ENCODE measurements at regions of chr10 and their contacts with region 1.

Region 1: GRCh38 chr10:86349474-86349873 is 17.1 kb downstream of the GRID1 start:
- DNase-seq: no peak
- H3K4me3 ChIP-seq: no peak overlapping the region
- H3K27ac ChIP-seq: no peak overlapping the region
- H3K4me1 ChIP-seq: peaks cover 12% of the 10 kb centered on the region; the same call in 1 of the 2 replicates
- H3K27me3 ChIP-seq: no peaks in the 10 kb centered on the region; the same call in none of the 2 replicates
- CTCF ChIP-seq: no peak

Region 2: GRCh38 chr10:86254526-86255174 is 94.8 kb before region 1 on chr10:
- CTCF ChIA-PET with region 1: interaction called, 3 read pairs
- POLR2A ChIA-PET with region 1: no interaction called
- intact Hi-C with region 1: loop called (anchors 10 kb)
- DNase-seq: peak; percentile 41 to 64
- H3K4me3 ChIP-seq: no peak overlapping the region
- H3K27ac ChIP-seq: no peak overlapping the region
- H3K4me1 ChIP-seq: no peaks in the 10 kb centered on the region
- H3K27me3 ChIP-seq: no peaks in the 10 kb centered on the region
- CTCF ChIP-seq: no peak